HepG2 (cell line): ENCODE measurements at regions of chr11 and their contacts with region 1.

Region 1: GRCh38 chr11:112219476-112220232 is 6.6 kb upstream of the PTS start:
- DNase-seq: peak; percentile 72
- ATAC-seq: peak; percentile 93
- H3K4me3 ChIP-seq: no peak overlapping the region
- H3K27ac ChIP-seq: no peak overlapping the region
- H3K4me1 ChIP-seq: peaks cover 46% of the 10 kb centered on the region
- H3K27me3 ChIP-seq: no peaks in the 10 kb centered on the region
- CTCF ChIP-seq: peak; percentile 91
- EP300 ChIP-seq: no peak
- POLR2A ChIP-seq: no peak
- RAD21 ChIP-seq: peak; percentile 80

Region 2: GRCh38 chr11:112086422-112087191 is 133.0 kb before region 1 on chr11 and contains the starts of genes SDHD and TIMM8B:
- CTCF ChIA-PET with region 1: no interaction called
- POLR2A ChIA-PET with region 1: no interaction called
- in situ Hi-C with region 1: no loop called
- intact Hi-C with region 1: no loop called
- DNase-seq: peak; percentile 96
- ATAC-seq: peak; percentile 96
- H3K4me3 ChIP-seq: peak within 1 kb of the TSS; percentile 92 to 97 (median 97)
- H3K27ac ChIP-seq: peak within 1 kb of the TSS; percentile 75
- H3K4me1 ChIP-seq: peaks cover 34% of the 10 kb centered on the region
- H3K27me3 ChIP-seq: no peaks in the 10 kb centered on the region; a peak in 1 of 5 replicates
- CTCF ChIP-seq: peak; percentile 52
- EP300 ChIP-seq: 0 out of 4 replicates have a peak, but pooled peaks of 1 of the 2 experiments have one; percentile 5
- POLR2A ChIP-seq: peak; percentile 87 to 92
- RAD21 ChIP-seq: peak; percentile 52
- total RNA-seq, gene SDHD: 123 and 187 TPM in 2 replicates
- total RNA-seq, gene TIMM8B: 98.3 and 125 TPM in 2 replicates

Region 3: DNA sequence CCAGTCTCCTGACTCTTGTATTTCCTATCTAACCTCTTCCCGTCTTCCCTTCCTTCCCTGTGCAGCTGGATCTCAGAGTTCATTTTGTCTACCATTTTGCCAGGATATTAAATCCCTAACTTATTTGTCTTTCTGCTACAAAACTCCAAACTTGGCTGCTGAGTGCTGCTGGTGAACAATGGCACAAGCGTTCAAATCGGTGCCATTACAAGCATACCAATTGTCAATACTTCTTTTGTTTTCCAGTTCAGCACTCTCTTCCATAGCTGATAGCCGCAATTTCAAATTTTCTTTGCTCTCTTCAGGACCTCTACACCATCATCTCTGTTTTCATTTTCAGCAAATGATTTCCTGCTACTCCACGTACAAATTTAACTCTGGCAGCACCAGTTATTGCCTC is 69.1 kb before region 1 on chr11:
- CTCF ChIA-PET with region 1: no interaction called
- POLR2A ChIA-PET with region 1: no interaction called
- in situ Hi-C with region 1: no loop called
- intact Hi-C with region 1: no loop called
- DNase-seq: no peak
- ATAC-seq: no peak
- H3K4me3 ChIP-seq: no peak overlapping the region
- H3K27ac ChIP-seq: no peak overlapping the region
- H3K4me1 ChIP-seq: no peaks in the 10 kb centered on the region
- H3K27me3 ChIP-seq: no peaks in the 10 kb centered on the region
- CTCF ChIP-seq: no peak
- EP300 ChIP-seq: no peak
- POLR2A ChIP-seq: no peak
- RAD21 ChIP-seq: no peak

Region 4: GRCh38 chr11:112174789-112175598 is 44.7 kb before region 1 on chr11 and contains the start of gene BCO2:
- CTCF ChIA-PET with region 1: no interaction called
- POLR2A ChIA-PET with region 1: no interaction called
- in situ Hi-C with region 1: no loop called
- intact Hi-C with region 1: no loop called
- DNase-seq: peak; percentile 70
- ATAC-seq: peak; percentile 97
- H3K4me3 ChIP-seq: no peak within 1 kb of the TSS
- H3K27ac ChIP-seq: no peak within 1 kb of the TSS
- H3K4me1 ChIP-seq: peaks cover 13% of the 10 kb centered on the region
- H3K27me3 ChIP-seq: no peaks in the 10 kb centered on the region; a peak in 1 of 5 replicates
- CTCF ChIP-seq: peak; percentile 72
- EP300 ChIP-seq: peak in 1 of 2 experiments; percentile 15; a peak in 1 of 4 replicates
- POLR2A ChIP-seq: no peak
- RAD21 ChIP-seq: no peak
- total RNA-seq, gene BCO2: 0.38 TPM in 1 of 2 replicates, not detected in the other

Region 5: DNA sequence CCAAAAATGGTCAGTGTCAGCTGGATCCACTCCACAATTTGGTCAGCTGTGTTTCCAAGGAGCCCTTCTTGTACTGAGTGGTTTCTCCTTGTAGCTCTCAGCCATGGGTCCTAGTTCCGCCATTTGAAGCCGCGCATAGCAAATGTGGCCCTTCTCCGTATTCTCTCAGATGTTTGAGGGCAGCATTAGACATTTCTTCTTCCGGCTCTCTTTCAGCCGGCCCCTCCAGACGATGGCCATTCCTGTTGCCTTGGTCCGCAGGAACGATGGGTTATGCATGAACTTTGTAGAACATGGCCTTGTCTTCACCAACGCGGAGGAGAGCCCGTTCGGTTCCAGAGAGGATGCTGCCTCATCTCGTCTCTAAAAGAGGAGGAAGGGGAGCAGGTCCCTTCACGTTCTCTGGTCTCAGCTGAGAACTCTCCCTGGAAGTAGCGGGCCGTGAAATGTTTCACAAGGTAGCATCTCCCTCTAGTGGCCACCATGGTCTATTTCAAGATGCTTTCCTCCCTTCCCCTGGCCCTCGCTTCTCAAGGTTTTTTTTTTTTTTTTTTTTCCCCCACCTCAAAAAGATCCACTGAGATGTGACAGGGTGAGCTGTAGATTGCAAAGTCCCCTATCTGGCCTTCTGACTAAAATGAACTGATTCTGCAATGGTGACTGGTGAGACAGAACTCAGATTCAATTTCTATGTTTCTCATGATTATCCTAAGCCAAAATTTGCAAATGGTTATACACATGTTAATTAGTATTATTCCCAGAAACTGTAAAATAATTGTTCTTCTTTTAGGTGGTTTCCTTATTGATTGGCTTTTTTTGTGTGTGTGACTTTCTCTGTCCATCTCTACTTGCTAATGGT is 60.8 kb after region 1 on chr11:
- CTCF ChIA-PET with region 1: interaction called, 128 read pairs
- POLR2A ChIA-PET with region 1: interaction called, 5 read pairs
- in situ Hi-C with region 1: loop called (anchors 5 kb)
- intact Hi-C with region 1: loop called (anchors 1 kb)
- DNase-seq: peak; percentile 72
- ATAC-seq: peak; percentile 94
- H3K4me3 ChIP-seq: peak overlapping the region; percentile 33 to 62 (median 46); a peak in 5 of 6 replicates
- H3K27ac ChIP-seq: no peak overlapping the region
- H3K4me1 ChIP-seq: peaks cover 23% of the 10 kb centered on the region
- H3K27me3 ChIP-seq: no peaks in the 10 kb centered on the region
- CTCF ChIP-seq: peak; percentile 82
- EP300 ChIP-seq: no peak
- POLR2A ChIP-seq: no peak
- RAD21 ChIP-seq: peak; percentile 51

Region 6: GRCh38 chr11:112425121-112425520 is 205.5 kb after region 1 on chr11:
- CTCF ChIA-PET with region 1: no interaction called
- POLR2A ChIA-PET with region 1: no interaction called
- in situ Hi-C with region 1: no loop called
- intact Hi-C with region 1: no loop called
- DNase-seq: no peak
- ATAC-seq: no peak
- H3K4me3 ChIP-seq: no peak overlapping the region
- H3K27ac ChIP-seq: no peak overlapping the region
- H3K4me1 ChIP-seq: no peaks in the 10 kb centered on the region
- H3K27me3 ChIP-seq: no peaks in the 10 kb centered on the region; a peak in 1 of 5 replicates
- CTCF ChIP-seq: no peak
- EP300 ChIP-seq: no peak
- POLR2A ChIP-seq: no peak
- RAD21 ChIP-seq: no peak

Region 7: GRCh38 chr11:112453601-112454577 is 234.2 kb after region 1 on chr11:
- CTCF ChIA-PET with region 1: no interaction called
- POLR2A ChIA-PET with region 1: no interaction called
- in situ Hi-C with region 1: loop called (anchors 10 kb)
- intact Hi-C with region 1: loop called (anchors 1 kb)
- DNase-seq: peak; percentile 29
- ATAC-seq: peak; percentile 79
- H3K4me3 ChIP-seq: no peak overlapping the region
- H3K27ac ChIP-seq: no peak overlapping the region
- H3K4me1 ChIP-seq: no peaks in the 10 kb centered on the region
- H3K27me3 ChIP-seq: no peaks in the 10 kb centered on the region
- CTCF ChIP-seq: peak; percentile 48
- EP300 ChIP-seq: no peak
- POLR2A ChIP-seq: no peak
- RAD21 ChIP-seq: no peak

Region 8: GRCh38 chr11:112555491-112556364 is 336.1 kb after region 1 on chr11:
- CTCF ChIA-PET with region 1: interaction called, 10 read pairs
- POLR2A ChIA-PET with region 1: no interaction called
- in situ Hi-C with region 1: loop called (anchors 10 kb)
- intact Hi-C with region 1: loop called (anchors 1 kb)
- DNase-seq: peak; percentile 21
- ATAC-seq: peak; percentile 95
- H3K4me3 ChIP-seq: no peak overlapping the region
- H3K27ac ChIP-seq: no peak overlapping the region
- H3K4me1 ChIP-seq: no peaks in the 10 kb centered on the region
- H3K27me3 ChIP-seq: peaks cover 1 to 5% of the 10 kb centered on the region in 2 experiments; a peak in 2 of 5 replicates
- CTCF ChIP-seq: peak; percentile 83
- EP300 ChIP-seq: no peak
- POLR2A ChIP-seq: no peak
- RAD21 ChIP-seq: peak; percentile 40

Region 9: DNA sequence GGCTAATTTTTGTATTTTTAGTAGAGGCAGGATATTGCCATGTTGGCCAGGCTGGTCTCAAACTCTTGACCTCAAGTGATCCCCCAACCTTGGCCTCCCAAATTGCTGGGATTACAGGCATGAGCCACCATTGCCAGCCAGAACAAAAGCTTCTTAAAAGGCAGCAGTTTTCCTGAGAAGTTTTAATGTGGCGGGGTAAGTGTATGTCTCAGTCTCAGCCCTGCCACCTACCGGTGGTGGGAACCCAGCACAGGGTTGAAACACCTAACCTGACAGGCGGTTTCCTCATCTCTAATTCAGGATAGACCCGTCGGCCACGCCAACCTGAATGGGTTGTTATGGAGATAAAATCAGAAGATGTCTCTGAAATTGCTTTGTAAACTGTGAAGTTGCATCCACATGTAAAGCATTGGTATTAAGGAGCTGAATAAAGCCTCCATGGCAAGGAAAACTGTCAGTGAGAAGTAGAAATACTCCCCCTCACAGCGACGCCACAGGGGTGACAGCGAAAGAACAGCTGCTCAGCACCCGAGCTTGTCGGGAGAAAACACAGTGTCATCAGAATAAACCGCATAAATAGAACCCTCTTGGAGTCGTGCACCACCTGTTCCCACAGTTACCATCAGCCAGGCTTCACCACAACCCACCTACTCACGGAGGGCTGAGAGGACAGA is 575.6 kb after region 1 on chr11:
- CTCF ChIA-PET with region 1: no interaction called
- POLR2A ChIA-PET with region 1: no interaction called
- in situ Hi-C with region 1: no loop called
- intact Hi-C with region 1: loop called (anchors 10 kb)
- DNase-seq: peak; percentile 19
- ATAC-seq: peak; percentile 93
- H3K4me3 ChIP-seq: no peak overlapping the region
- H3K27ac ChIP-seq: no peak overlapping the region
- H3K4me1 ChIP-seq: no peaks in the 10 kb centered on the region
- H3K27me3 ChIP-seq: no peaks in the 10 kb centered on the region; a peak in 1 of 5 replicates
- CTCF ChIP-seq: peak; percentile 63
- EP300 ChIP-seq: no peak
- POLR2A ChIP-seq: no peak
- RAD21 ChIP-seq: no peak